Sigmoid colon (tissue), 7 donors: ENCODE measurements at regions of chr6 and their contacts with region 1.

Region 1: GRCh38 chr6:41449399-41450245 is 96.6 kb upstream of the FOXP4 start:
- DNase-seq: peak; percentile 89
- H3K4me3 ChIP-seq: no peak overlapping the region
- H3K27ac ChIP-seq: peak overlapping the region; percentile 47 to 90 (median 77)
- H3K4me1 ChIP-seq: peaks cover 0 to 64% (median 58%) of the 10 kb centered on the region in 4 donors
- H3K27me3 ChIP-seq: no peaks in the 10 kb centered on the region
- CTCF ChIP-seq: no peak
- EP300 ChIP-seq: peak in 2 of 4 donors; percentile 19 to 57
- POLR2A ChIP-seq: no peak

Region 2: GRCh38 chr6:41505122-41506049 is 55.8 kb after region 1 on chr6:
- intact Hi-C with region 1: loop called (anchors 2 kb)
- DNase-seq: peak; percentile 95
- H3K4me3 ChIP-seq: peak overlapping the region; percentile 14 to 49 (median 38)
- H3K27ac ChIP-seq: peak overlapping the region; percentile 73 to 91 (median 76)
- H3K4me1 ChIP-seq: peaks cover 0 to 51% (median 33%) of the 10 kb centered on the region in 4 donors
- H3K27me3 ChIP-seq: no peaks in the 10 kb centered on the region
- CTCF ChIP-seq: no peak
- EP300 ChIP-seq: no peak
- POLR2A ChIP-seq: no peak